GM10248 (cell line): ENCODE measurements at regions of chr20 and their contacts with region 1.

Region 1: DNA sequence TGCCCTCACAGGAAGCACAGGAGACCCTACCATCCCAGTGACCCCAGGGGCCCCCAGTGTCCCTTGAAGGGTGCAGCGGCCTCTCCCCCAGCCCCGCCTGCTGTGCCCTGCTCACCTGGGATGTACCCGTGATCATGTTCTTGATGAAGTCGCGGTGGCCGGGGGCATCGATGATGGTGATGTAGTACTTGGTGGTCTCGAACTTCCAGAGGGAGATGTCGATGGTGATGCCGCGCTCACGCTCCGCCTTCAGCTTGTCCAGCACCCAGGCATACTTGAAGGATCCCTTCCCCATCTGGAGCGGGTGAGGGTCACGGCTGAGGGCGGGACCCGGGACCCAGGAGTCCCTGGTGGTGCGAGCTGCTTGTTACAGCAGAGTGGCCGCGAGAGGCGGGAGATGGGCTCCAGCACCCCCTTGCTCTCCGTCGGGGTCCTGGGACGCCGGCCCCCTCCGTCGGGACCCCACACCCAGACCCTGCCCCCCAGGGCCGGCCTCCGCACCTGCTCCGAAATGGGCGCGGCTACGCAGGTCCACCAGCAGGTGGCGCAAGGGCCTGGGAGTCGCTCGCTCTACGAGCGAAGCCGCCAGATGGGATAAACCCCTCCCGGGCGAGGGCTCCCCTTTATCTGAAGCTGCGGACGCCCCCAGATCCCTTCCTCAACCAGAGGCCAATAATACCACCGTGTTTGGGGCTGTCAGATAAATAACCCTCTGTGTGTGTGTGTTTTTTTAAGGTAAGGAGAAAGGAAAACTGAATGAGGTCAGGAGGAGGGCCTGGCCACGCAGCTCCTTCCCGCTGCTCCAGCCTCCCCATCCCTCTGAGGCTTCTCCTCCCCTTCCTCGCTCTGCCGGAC is 2.9 kb downstream of the EEF1A2 start:
- DNase-seq: peak; percentile 89
- CTCF ChIP-seq: peak; percentile 97

Region 2: DNA sequence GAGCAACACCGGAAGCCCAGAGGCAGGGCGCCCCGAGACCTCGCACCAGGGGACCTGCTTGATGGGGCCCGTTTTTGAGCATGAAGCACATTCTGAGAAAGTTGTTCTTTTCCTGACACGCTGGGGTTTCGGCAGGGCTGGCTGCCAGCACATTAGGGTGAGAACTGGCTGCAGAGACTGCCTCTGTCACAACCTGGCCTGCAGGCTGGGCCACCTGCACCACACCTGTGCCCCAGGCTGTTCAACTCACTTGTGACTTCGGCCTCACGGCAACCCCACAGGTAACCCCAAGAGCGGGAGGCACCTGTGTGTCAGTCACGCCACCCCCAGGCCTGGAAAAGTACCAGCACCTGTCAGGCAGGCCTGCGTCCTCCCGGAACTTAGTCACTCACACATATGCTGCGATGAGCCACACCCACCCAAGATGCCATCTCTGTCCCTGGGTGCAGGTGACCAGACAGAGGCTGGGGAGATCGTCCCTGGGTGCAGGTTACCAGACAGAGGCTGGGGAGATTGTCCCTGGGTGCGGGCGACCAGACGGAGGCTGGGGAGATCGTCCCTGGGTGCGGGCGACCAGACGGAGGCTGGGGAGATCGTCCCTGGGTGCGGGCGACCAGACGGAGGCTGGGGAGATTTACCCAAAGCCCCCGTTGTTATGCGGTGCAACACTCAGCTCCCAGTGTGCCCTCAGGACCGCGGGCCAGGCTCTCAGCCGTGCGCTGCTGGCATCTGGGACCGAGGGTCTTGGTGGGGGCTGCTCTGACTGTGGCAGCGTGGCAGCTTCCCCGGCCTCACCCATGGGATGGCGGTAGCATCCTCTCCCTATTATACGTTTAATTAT is 406.7 kb before region 1 on chr20:
- CTCF ChIA-PET with region 1: no interaction called
- POLR2A ChIA-PET with region 1: no interaction called
- DNase-seq: no peak
- CTCF ChIP-seq: no peak

Region 3: DNA sequence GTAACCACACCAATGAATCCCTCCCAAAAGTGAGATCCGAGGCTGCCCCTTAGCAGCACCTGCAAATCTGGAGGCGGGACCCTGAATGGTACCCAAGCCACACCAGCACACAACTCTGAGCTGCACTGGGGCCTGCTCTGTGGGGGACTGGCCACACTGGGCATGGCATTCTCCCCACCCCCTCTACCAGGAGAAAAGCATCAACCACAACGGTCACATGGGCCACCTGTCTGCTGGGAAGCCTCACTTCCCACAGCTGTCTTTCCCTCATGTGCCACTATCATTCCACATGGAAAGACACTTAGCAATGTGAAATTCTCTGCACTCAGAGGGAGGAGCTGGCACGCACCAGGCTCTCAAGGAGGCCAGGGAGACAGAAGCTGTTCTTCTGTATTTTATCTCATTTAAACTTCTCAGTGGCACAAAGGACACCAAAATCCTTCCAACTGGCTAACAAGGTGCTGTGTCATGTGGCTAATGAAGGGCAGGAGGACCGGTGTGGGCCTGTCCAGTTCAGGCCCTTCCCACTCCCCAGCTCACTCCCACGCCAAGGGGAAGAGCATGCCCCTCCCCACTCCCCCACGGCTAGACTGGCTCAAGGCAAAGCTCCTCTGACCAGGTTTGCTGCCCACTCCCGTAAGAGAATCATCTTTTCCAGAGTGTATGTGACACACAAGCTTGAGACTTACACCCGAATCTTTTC is 299.0 kb before region 1 on chr20:
- CTCF ChIA-PET with region 1: no interaction called
- POLR2A ChIA-PET with region 1: no interaction called
- DNase-seq: no peak
- CTCF ChIP-seq: no peak

Region 4: GRCh38 chr20:63409459-63410435 is 86.2 kb before region 1 on chr20:
- CTCF ChIA-PET with region 1: no interaction called
- POLR2A ChIA-PET with region 1: no interaction called
- DNase-seq: no peak
- CTCF ChIP-seq: no peak

Region 5: DNA sequence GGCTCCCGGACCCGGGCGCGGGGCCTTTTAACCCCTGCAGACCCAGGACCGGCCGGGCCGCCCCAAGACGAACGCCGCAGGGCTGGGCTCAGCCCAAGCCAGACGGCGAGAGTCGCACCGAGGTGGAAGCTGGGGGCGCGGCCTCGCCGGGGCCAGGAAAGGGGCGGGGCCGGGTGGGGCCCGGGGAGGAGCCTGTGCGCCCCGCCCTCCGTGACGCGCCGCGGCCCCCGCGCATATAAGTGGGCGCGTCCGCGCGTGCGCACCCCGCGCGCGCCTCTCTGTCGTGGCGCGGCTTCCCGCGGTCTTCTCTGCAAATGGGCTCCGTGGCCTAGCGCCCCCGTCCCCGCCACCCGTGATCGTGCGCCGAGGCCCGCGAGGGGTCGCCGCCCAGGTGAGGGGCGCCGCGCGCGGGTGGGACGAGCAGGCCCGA is 24.6 kb after region 1 on chr20 and contains the start of gene PPDPF:
- CTCF ChIA-PET with region 1: interaction called, 10 read pairs
- POLR2A ChIA-PET with region 1: no interaction called
- DNase-seq: peak; percentile 99
- CTCF ChIP-seq: peak; percentile 2